ENCODE measurements at regions of chrX and their contacts with region 1.

Region 1: DNA sequence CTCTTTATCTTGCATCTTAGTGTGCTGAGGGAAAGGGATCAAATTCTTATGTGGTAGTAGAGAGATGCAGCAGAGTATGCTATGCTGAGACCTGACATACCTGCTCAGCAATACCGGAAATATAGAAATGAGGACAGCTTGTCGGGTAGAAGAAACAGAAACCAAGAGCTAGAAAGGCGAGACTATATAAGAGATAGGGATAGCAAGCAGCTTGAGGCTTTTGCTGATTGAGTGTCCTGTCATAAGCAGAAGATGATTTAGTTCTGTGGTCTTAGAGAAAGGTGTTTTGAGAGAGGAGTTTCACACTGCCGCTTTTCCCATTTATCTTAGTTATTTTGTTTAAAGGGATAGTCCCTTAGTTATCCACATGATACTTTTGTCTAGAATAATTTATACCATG is 31.7 kb downstream of the USP9X start:
- DNase-seq: peak in 2 of 35 experiments; percentile 2 to 57
- ATAC-seq: peak; percentile 67 to 88 (median 80)
- H3K4me3 ChIP-seq: no peak overlapping the region
- H3K4me3 Mint-ChIP-seq: peak overlapping the region; percentile 54 to 65 (median 55)
- H3K27ac ChIP-seq: peak overlapping the region; percentile 55
- H3K27ac Mint-ChIP-seq: peak overlapping the region; percentile 76 to 77
- H3K4me1 ChIP-seq: peaks cover 21 to 39% of the 10 kb centered on the region in 2 experiments
- H3K4me1 Mint-ChIP-seq: peaks cover 80 to 88% (median 83%) of the 10 kb centered on the region in 3 donors
- H3K27me3 ChIP-seq: no peaks in the 10 kb centered on the region
- H3K27me3 Mint-ChIP-seq: no peaks in the 10 kb centered on the region

Region 2: GRCh38 chrX:40651620-40652223 is 465.2 kb before region 1 on chrX:
- CTCF ChIA-PET with region 1: interaction called, 17 read pairs
- POLR2A ChIA-PET with region 1: interaction called in 1 of 2 experiments, 7 read pairs
- DNase-seq: peak; percentile 38 to 84 (median 64)
- ATAC-seq: no peak
- H3K4me3 ChIP-seq: no peak overlapping the region
- H3K4me3 Mint-ChIP-seq: no peak overlapping the region
- H3K27ac ChIP-seq: no peak overlapping the region
- H3K27ac Mint-ChIP-seq: peak overlapping the region in 1 of 2 donors; percentile 3
- H3K4me1 ChIP-seq: peaks cover 0 to 5% of the 10 kb centered on the region in 2 experiments
- H3K4me1 Mint-ChIP-seq: peaks cover 9 to 17% (median 12%) of the 10 kb centered on the region in 3 donors
- H3K27me3 ChIP-seq: no peaks in the 10 kb centered on the region
- H3K27me3 Mint-ChIP-seq: no peaks in the 10 kb centered on the region

Region 3: GRCh38 chrX:40877887-40878286 is 239.1 kb before region 1 on chrX:
- CTCF ChIA-PET with region 1: interaction called, 5 to 48 read pairs
- POLR2A ChIA-PET with region 1: interaction called in 1 of 2 experiments, 8 read pairs
- DNase-seq: peak in 7 of 35 experiments; percentile 0 to 55 (median 8)
- ATAC-seq: peak in 1 of 4 experiments; percentile 34
- H3K4me3 ChIP-seq: no peak overlapping the region
- H3K4me3 Mint-ChIP-seq: no peak overlapping the region
- H3K27ac ChIP-seq: no peak overlapping the region
- H3K27ac Mint-ChIP-seq: no peak overlapping the region
- H3K4me1 ChIP-seq: no peaks in the 10 kb centered on the region
- H3K4me1 Mint-ChIP-seq: peaks cover 0 to 3% (median 0%) of the 10 kb centered on the region in 3 donors
- H3K27me3 ChIP-seq: no peaks in the 10 kb centered on the region
- H3K27me3 Mint-ChIP-seq: peaks cover 0 to 27% of the 10 kb centered on the region in 2 donors

Region 4: GRCh38 chrX:41084044-41084892 is 32.7 kb before region 1 on chrX:
- CTCF ChIA-PET with region 1: interaction called, 6 to 18 read pairs
- POLR2A ChIA-PET with region 1: interaction called in 1 of 2 experiments, 12 read pairs
- DNase-seq: peak; percentile 90 to 100 (median 94)
- ATAC-seq: peak; percentile 65 to 70 (median 68)
- H3K4me3 ChIP-seq: peak overlapping the region; percentile 88 to 89
- H3K4me3 Mint-ChIP-seq: peak overlapping the region; percentile 91 to 95 (median 93)
- H3K27ac ChIP-seq: peak overlapping the region; percentile 99
- H3K27ac Mint-ChIP-seq: peak overlapping the region; percentile 98 to 99
- H3K4me1 ChIP-seq: peaks cover 0 to 14% of the 10 kb centered on the region in 2 experiments
- H3K4me1 Mint-ChIP-seq: peaks cover 21 to 31% (median 24%) of the 10 kb centered on the region in 3 donors
- H3K27me3 ChIP-seq: no peaks in the 10 kb centered on the region
- H3K27me3 Mint-ChIP-seq: peaks cover 0 to 9% of the 10 kb centered on the region in 2 donors

Region 5: GRCh38 chrX:41090568-41091238 is 26.2 kb before region 1 on chrX:
- CTCF ChIA-PET with region 1: interaction called, 6 to 18 read pairs
- POLR2A ChIA-PET with region 1: interaction called, 3 to 7 read pairs
- DNase-seq: no peak
- ATAC-seq: no peak
- H3K4me3 ChIP-seq: no peak overlapping the region
- H3K4me3 Mint-ChIP-seq: peak overlapping the region; percentile 39 to 95 (median 62)
- H3K27ac ChIP-seq: no peak overlapping the region
- H3K27ac Mint-ChIP-seq: no peak overlapping the region
- H3K4me1 ChIP-seq: peaks cover 17 to 32% of the 10 kb centered on the region in 2 experiments
- H3K4me1 Mint-ChIP-seq: peaks cover 75 to 86% (median 82%) of the 10 kb centered on the region in 3 donors
- H3K27me3 ChIP-seq: no peaks in the 10 kb centered on the region
- H3K27me3 Mint-ChIP-seq: peaks cover 0 to 3% of the 10 kb centered on the region in 2 donors